Caco-2 (cell line): ENCODE measurements at regions of chr17 and their contacts with region 1.

Region 1: GRCh38 chr17:4966844-4967538 is 626 bp downstream of the SPAG7 start:
- DNase-seq: peak; percentile 94 to 97
- H3K4me3 ChIP-seq: peak overlapping the region; percentile 68
- H3K4me3 Mint-ChIP-seq: no peak overlapping the region
- H3K27ac Mint-ChIP-seq: no peak overlapping the region
- H3K4me1 ChIP-seq: peaks cover 4% of the 10 kb centered on the region; the same call in 1 of the 2 replicates
- H3K4me1 Mint-ChIP-seq: no peaks in the 10 kb centered on the region
- H3K27me3 ChIP-seq: no peaks in the 10 kb centered on the region
- H3K27me3 Mint-ChIP-seq: no peaks in the 10 kb centered on the region
- CTCF ChIP-seq: no peak

Region 2: DNA sequence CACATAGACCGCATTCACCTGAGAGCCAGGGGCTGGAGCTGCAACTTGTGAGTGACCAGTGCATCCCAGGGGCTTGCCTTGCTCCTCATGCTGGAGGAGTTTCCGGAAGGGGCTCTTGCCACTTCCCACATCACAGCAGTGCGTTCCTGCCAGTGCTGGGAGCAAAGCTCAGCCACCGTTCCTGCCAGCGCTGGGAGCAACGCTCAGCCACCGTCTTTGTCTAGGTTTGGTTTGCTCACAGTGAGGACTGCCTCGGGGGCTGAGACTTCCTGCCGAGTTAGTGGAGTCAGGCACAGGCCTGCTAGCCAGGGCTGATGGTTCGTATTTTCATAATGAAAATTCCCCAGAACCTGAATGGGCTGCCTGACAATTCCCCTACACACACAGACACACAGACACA is 58.7 kb before region 1 on chr17:
- CTCF ChIA-PET with region 1: interaction called, 13 read pairs
- POLR2A ChIA-PET with region 1: interaction called, 19 read pairs
- intact Hi-C with region 1: no loop called
- DNase-seq: no peak
- H3K4me3 ChIP-seq: no peak overlapping the region
- H3K4me3 Mint-ChIP-seq: no peak overlapping the region
- H3K27ac Mint-ChIP-seq: no peak overlapping the region
- H3K4me1 ChIP-seq: peaks cover 8% of the 10 kb centered on the region
- H3K4me1 Mint-ChIP-seq: peaks cover 4% of the 10 kb centered on the region
- H3K27me3 ChIP-seq: no peaks in the 10 kb centered on the region
- H3K27me3 Mint-ChIP-seq: no peaks in the 10 kb centered on the region
- CTCF ChIP-seq: no peak

Region 3: GRCh38 chr17:4939796-4940624 is 27.0 kb before region 1 on chr17 and contains the starts of genes RNF167 and SLC25A11:
- CTCF ChIA-PET with region 1: interaction called, 7 read pairs
- POLR2A ChIA-PET with region 1: interaction called, 54 read pairs
- intact Hi-C with region 1: loop called (anchors 2 kb)
- DNase-seq: peak; percentile 91 to 94
- H3K4me3 ChIP-seq: peak within 1 kb of the TSS; percentile 73
- H3K4me3 Mint-ChIP-seq: peak within 1 kb of the TSS; percentile 87
- H3K27ac Mint-ChIP-seq: peak within 1 kb of the TSS; percentile 89
- H3K4me1 ChIP-seq: no peaks in the 10 kb centered on the region
- H3K4me1 Mint-ChIP-seq: peaks cover 5% of the 10 kb centered on the region
- H3K27me3 ChIP-seq: no peaks in the 10 kb centered on the region
- H3K27me3 Mint-ChIP-seq: no peaks in the 10 kb centered on the region
- CTCF ChIP-seq: no peak
- total RNA-seq, gene RNF167: 55.1 and 60.9 TPM in 2 replicates
- total RNA-seq, gene SLC25A11: 36.5 and 40.1 TPM in 2 replicates

Region 4: GRCh38 chr17:4948931-4949320 is 18.1 kb before region 1 on chr17:
- CTCF ChIA-PET with region 1: interaction called, 5 read pairs
- POLR2A ChIA-PET with region 1: interaction called, 16 read pairs
- intact Hi-C with region 1: loop called (anchors 1 kb)
- DNase-seq: peak; percentile 81 to 86
- H3K4me3 ChIP-seq: peak overlapping the region; percentile 97
- H3K4me3 Mint-ChIP-seq: peak overlapping the region; percentile 85
- H3K27ac Mint-ChIP-seq: peak overlapping the region; percentile 90
- H3K4me1 ChIP-seq: peaks cover 15% of the 10 kb centered on the region
- H3K4me1 Mint-ChIP-seq: peaks cover 10% of the 10 kb centered on the region
- H3K27me3 ChIP-seq: no peaks in the 10 kb centered on the region
- H3K27me3 Mint-ChIP-seq: no peaks in the 10 kb centered on the region
- CTCF ChIP-seq: no peak

Region 5: DNA sequence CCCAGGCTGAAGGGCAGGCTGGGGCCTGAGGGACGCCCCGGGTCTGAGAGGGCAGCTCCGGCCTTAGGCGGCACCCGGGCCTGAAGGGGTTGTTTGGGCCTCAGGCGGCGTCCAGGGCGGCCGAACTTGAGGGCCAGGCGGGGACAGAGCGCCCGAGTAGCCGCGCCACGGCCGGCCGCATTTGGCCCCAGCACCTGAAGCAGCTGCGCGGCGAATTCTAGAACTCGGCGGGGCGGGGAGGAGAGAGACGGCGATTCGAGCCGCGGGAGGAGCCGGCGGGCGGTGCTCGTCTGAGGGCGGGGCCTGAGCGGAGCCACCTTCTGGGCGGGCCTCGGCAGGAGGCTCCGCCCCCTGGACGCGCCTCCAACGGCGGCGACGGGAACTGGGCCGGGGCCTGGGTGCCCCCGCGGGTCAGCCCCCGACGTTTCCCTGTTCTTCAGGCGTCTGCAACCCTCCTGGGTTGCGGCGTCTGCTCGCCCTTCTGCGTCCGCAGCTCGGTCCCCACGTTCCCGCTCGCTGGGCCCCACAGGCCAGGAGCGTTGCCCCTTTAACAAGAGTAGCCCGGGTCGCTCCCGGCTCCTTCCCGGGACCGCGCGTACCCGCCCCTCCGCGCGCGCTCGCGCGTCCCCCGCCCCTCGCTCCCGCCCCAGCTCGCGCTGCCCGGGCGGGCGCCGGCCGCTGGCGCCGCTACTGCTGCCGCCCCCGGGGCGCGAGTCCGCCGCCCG is 30.5 kb after region 1 on chr17 and contains the starts of genes INCA1 and KIF1C:
- CTCF ChIA-PET with region 1: no interaction called
- POLR2A ChIA-PET with region 1: interaction called, 15 read pairs
- intact Hi-C with region 1: no loop called
- DNase-seq: peak; percentile 86 to 89
- H3K4me3 ChIP-seq: peak within 1 kb of the TSS; percentile 78
- H3K4me3 Mint-ChIP-seq: peak within 1 kb of the TSS; percentile 84
- H3K27ac Mint-ChIP-seq: peak within 1 kb of the TSS; percentile 57
- H3K4me1 ChIP-seq: peaks cover 5% of the 10 kb centered on the region
- H3K4me1 Mint-ChIP-seq: no peaks in the 10 kb centered on the region
- H3K27me3 ChIP-seq: no peaks in the 10 kb centered on the region
- H3K27me3 Mint-ChIP-seq: no peaks in the 10 kb centered on the region
- CTCF ChIP-seq: no peak
- total RNA-seq, gene INCA1: 0.64 and 1.4 TPM in 2 replicates
- total RNA-seq, gene KIF1C: 87.5 and 92.0 TPM in 2 replicates

Region 6: GRCh38 chr17:5042157-5043022 is 75.4 kb after region 1 on chr17:
- CTCF ChIA-PET with region 1: no interaction called
- POLR2A ChIA-PET with region 1: no interaction called
- intact Hi-C with region 1: no loop called
- DNase-seq: no peak
- H3K4me3 ChIP-seq: no peak overlapping the region
- H3K4me3 Mint-ChIP-seq: no peak overlapping the region
- H3K27ac Mint-ChIP-seq: no peak overlapping the region
- H3K4me1 ChIP-seq: no peaks in the 10 kb centered on the region
- H3K4me1 Mint-ChIP-seq: no peaks in the 10 kb centered on the region
- H3K27me3 ChIP-seq: no peaks in the 10 kb centered on the region
- H3K27me3 Mint-ChIP-seq: no peaks in the 10 kb centered on the region
- CTCF ChIP-seq: no peak